ENCODE measurements at regions of chr10 and their contacts with region 1.

Region 1: DNA sequence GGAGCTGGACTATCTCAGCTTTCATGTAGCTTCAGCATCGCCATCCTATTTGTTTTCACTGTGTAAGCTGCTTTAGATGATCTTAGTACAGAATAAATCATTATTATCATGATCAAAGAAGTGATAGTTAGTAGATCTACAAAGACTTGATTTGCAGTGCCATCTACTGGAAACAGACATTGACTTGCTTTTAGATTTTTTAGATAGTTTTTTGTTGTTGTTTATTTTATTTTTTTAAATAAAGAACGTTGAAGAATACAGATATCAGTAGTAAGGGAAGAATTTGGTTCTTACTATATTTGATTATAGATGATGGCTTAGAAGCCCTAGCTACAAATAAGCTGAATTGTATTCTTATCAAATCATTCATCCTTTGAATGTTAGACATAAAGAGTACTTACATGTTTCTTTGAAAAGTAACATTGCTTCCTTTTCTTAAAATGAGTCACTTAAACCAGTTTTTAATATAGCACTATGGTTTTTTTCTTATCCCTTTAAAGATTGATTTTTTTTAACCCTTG is 6.3 kb upstream of the SFMBT2 start:
- DNase-seq: no peak
- ATAC-seq: no peak

Region 2: GRCh38 chr10:6794441-6794840 is 622.7 kb before region 1 on chr10:
- intact Hi-C with region 1: loop called in 1 of 2 experiments (anchors 5 kb)
- DNase-seq: no peak
- ATAC-seq: no peak

Region 3: DNA sequence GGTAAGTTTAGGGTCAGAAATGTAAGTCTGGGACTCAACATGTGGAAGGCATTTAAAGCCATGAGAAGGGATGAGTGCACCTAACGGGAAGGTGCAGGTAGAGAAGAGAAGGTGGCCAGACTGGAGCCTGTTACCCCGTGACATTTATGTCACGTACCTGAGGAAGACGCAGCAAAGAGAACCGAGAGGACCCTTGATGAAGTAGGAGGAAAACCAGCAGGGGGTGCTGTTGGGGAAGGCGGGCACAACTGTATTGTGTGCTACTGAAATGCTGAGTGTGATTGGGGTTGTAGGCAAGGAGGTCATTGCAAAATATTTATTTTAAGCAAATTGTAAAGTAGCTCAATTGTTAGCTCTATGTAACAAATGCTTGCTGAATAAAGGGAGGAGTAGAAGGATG is 498.9 kb before region 1 on chr10:
- intact Hi-C with region 1: loop called (anchors 5 kb)
- DNase-seq: peak; percentile 26
- ATAC-seq: no peak

Region 4: GRCh38 chr10:7121154-7121810 is 295.9 kb before region 1 on chr10:
- intact Hi-C with region 1: loop called (anchors 5 kb)
- DNase-seq: peak; percentile 57
- ATAC-seq: peak; percentile 63 to 70